CD8-positive, alpha-beta memory T cell (primary cell): ENCODE measurements at regions of chr5 and their contacts with region 1.

Region 1: DNA sequence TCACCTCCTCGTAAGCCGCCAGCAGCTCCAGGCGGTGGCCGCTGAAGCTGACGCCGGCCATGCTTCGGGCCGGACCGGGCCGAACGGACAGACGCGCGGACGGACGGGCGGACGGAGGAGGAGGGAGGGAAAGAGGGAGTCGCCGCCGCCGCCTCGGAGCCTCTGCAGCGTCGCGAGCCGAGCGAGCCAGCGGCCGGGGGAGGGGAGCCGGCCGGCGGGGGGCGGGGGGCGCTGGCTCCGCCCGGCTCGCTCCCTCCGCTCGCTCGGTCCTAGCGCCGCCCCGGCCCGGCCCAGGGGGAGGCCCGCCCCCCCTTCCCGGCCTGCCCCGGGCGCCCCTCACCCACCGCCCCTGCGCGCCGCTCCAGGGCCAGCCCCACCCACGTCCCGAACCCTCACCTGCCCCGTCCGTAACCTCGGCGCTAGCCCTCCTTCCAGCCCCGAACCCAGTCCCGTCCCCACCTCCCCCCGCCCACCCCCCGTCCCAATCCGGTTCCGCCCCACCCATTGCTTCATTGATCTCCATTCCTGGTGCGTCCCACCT is at the start of gene DBN1:
- DNase-seq: no peak
- H3K4me3 ChIP-seq: peak within 1 kb of the TSS; percentile 45
- H3K4me3 Mint-ChIP-seq: peak within 1 kb of the TSS; percentile 80 to 94 (median 84)
- H3K27ac ChIP-seq: peak within 1 kb of the TSS; percentile 47
- H3K27ac Mint-ChIP-seq: peak within 1 kb of the TSS; percentile 3 to 92 (median 76)
- H3K4me1 ChIP-seq: peaks cover 30% of the 10 kb centered on the region
- H3K4me1 Mint-ChIP-seq: peaks cover 34 to 56% (median 36%) of the 10 kb centered on the region in 3 donors
- H3K27me3 ChIP-seq: no peaks in the 10 kb centered on the region
- H3K27me3 Mint-ChIP-seq: peaks cover 0 to under 1% of the 10 kb centered on the region in 2 donors
- total RNA-seq, gene DBN1: 47.9 to 50.5 TPM

Region 2: GRCh38 chr5:177486256-177486655 is 12.7 kb after region 1 on chr5:
- CTCF ChIA-PET with region 1: interaction called, 7 read pairs
- POLR2A ChIA-PET with region 1: interaction called, 14 read pairs
- DNase-seq: no peak
- H3K4me3 ChIP-seq: no peak overlapping the region
- H3K4me3 Mint-ChIP-seq: no peak overlapping the region
- H3K27ac ChIP-seq: no peak overlapping the region
- H3K27ac Mint-ChIP-seq: no peak overlapping the region
- H3K4me1 ChIP-seq: no peaks in the 10 kb centered on the region
- H3K4me1 Mint-ChIP-seq: no peaks in the 10 kb centered on the region
- H3K27me3 ChIP-seq: no peaks in the 10 kb centered on the region
- H3K27me3 Mint-ChIP-seq: no peaks in the 10 kb centered on the region

Region 3: DNA sequence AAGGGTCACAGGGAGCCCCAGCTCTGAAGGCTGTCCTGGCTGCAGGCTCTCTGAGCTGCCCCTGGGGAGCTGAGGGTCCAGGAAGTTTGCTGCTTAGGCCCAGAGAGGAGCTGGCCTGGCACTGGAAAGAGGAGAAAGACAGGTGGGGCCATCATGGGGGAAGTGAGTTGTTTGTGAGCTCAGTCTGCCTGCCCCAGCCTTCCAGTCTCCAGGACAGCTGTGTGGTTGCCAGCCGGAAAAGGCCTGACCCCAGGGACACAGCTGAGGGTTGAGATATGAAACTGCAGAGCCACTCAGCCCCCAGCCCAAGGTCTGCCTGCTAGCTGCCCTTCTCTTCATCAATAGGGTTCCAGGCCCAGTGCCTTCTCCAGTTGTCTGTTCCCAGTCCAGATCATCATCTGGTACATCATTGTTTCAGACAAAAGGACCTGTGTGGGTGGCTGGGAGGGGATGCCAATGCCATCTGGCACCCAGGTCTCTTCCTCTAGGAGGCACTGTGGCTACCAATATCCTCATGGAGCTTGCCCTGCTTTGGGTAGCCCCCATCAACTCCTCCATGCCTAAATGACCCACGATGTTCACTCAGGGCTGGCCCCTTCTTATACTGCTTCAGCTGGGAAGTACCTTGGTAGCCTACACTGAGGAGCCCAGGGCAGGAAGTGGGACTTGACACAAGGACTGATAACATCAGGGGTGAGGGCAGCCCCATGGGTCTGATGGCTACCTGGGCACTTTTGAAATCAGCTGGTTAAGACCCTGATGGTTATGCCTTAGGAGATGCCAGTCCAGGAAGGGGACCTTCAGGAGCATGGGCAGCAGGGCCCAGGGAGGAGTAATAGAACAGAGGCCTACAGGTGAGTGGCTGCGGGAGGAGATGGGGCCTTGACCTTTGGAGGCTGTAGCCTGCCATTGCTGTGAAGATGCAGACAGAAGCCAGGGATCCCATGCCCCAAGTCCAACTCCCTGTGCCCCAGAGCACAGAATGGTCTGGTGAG is 47.7 kb after region 1 on chr5:
- CTCF ChIA-PET with region 1: no interaction called
- POLR2A ChIA-PET with region 1: no interaction called
- DNase-seq: peak in 1 of 5 donors; percentile 34
- H3K4me3 ChIP-seq: no peak overlapping the region
- H3K4me3 Mint-ChIP-seq: peak overlapping the region in 4 of 7 donors; percentile 12 to 60 (median 22)
- H3K27ac ChIP-seq: no peak overlapping the region
- H3K27ac Mint-ChIP-seq: peak overlapping the region; percentile 12 to 85 (median 70)
- H3K4me1 ChIP-seq: peaks cover 20% of the 10 kb centered on the region
- H3K4me1 Mint-ChIP-seq: peaks cover 31 to 47% (median 44%) of the 10 kb centered on the region in 3 donors
- H3K27me3 ChIP-seq: no peaks in the 10 kb centered on the region
- H3K27me3 Mint-ChIP-seq: peaks cover 0 to 2% of the 10 kb centered on the region in 2 donors